AG04450 (cell line): ENCODE measurements at regions of chr17 and their contacts with region 1.

Region 1: DNA sequence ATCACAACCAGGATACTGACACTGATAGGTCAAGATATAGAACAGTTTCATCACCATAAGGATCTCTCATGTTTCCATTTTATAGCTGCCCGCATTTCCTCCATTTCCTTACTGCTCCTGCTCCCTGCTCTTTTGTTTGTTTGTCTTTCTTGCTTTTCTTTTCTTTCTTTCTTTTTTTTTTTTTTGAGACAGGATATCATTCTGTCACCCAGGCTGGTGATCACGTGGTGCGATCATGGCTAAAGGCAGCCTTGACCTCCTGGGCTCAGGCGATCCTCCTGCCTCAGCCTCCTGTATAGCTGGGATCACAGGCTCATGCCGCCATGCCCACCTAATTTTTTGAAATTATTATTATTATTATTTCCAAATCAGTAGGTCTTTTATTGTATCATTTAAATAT is 31.7 kb downstream of the PRAC1 start:
- DNase-seq: no peak
- H3K4me3 ChIP-seq: no peak overlapping the region
- H3K27ac ChIP-seq: no peak overlapping the region
- H3K27me3 ChIP-seq: peaks cover 9% of the 10 kb centered on the region
- CTCF ChIP-seq: no peak

Region 2: DNA sequence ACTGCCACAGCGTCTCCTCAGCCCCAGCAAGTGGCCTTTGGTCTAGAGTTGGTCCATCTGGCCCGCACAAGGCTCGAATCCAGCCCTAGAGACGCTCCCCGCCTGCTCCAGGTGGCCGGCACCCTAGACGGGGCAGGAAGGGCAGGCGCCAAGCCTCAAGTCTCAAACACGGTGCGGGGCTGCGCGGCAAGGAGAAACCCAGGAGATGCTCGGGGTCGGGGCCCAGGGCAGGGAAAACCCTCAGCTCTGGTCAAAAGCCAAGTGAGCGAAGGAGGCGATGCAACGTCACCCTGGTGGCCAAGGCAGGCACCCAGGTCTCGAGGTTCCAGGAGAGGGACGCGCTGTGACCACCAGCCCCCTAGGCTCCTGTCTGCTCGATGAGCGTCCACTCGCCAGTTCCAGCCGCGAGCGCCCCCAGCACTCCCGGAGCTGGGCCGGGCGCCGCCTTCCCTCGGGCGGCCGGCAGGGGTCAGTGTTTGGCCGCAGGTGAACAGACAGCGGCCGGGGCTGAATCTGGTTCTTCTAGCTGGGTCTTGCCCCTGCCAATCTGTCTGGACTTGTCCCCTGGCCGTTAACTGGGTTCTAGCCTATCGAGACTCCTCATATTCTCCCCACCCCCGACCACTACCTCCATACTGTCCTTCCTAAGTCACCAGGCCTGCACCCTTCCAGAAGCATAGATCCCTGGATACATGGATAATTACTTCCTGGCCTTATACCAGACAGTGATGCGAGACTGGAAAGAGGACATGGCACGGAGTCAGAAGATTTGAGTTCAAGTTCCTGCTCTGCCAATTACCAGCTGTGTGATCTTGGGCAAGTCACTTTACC is 12.3 kb before region 1 on chr17:
- CTCF ChIA-PET with region 1: interaction called, 11 read pairs
- POLR2A ChIA-PET with region 1: no interaction called
- DNase-seq: no peak
- H3K4me3 ChIP-seq: no peak overlapping the region
- H3K27ac ChIP-seq: no peak overlapping the region
- H3K27me3 ChIP-seq: peaks cover 25% of the 10 kb centered on the region
- CTCF ChIP-seq: peak; percentile 84